HEK293 (cell line): ENCODE measurements at regions of chr12 and their contacts with region 1.

Region 1: DNA sequence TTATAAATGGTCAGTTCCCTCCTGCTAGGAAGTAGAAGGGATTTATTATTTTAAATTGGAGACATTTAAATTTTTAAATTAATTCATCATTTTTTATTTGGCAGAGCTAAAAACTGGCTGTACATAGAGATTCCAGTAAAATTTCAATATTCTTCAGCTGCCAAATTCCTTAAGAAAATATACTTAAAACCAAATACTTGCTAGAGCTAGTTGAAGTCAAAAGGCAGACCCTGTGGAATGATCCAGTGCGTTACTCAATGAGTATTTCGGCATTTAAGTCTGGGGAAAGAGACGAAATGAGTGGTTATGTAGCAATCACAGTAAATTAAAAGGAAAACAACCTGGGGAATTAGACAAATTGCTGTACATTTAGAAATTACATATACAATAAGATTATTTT is 1104.7 kb downstream of the SLC6A15 start:
- H3K4me3 ChIP-seq: no peak overlapping the region
- H3K27ac ChIP-seq: no peak overlapping the region
- H3K4me1 ChIP-seq: no peaks in the 10 kb centered on the region
- CTCF ChIP-seq: no peak

Region 2: DNA sequence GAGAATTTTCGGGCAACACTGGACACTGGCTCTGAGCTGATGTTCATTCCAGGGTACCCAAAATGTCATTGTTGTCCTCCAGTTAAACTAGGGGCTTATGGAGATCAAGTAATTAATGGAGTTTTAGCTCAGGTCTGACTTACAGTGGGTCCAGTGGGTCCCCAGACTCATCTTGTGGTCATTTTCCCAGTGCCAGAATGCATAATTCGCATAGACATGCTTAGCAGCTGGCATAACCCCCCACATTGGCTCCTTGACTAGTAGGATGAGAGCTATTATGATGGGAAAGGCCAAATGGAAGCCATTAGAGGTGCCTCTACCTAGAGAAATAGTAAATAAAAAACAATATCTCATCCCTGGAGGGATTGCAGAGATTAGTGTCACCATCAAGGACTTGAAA is 302.3 kb before region 1 on chr12:
- CTCF ChIA-PET with region 1: no interaction called
- POLR2A ChIA-PET with region 1: no interaction called
- H3K4me3 ChIP-seq: no peak overlapping the region
- H3K27ac ChIP-seq: no peak overlapping the region
- H3K4me1 ChIP-seq: no peaks in the 10 kb centered on the region
- CTCF ChIP-seq: no peak

Region 3: DNA sequence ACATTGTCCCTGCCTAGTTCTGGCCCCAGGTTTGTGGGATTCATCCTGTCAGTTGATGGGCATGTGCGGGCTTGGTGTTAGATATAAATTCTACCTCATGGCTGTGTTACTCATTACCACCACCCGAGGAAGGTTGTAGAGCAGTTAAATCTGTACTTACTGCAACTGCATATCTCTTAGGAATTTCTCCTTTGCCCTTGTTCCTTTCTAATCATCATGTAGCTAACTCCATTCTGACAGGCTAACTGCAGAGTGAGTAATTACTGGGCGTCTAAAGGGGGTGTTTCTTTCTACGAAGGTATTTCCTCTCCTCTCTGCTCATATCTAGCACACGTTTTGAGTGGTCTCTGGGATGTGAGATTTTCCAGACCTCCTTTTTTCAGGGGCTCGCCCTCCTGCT is 44.4 kb before region 1 on chr12:
- CTCF ChIA-PET with region 1: no interaction called
- POLR2A ChIA-PET with region 1: no interaction called
- H3K4me3 ChIP-seq: no peak overlapping the region
- H3K27ac ChIP-seq: no peak overlapping the region
- H3K4me1 ChIP-seq: no peaks in the 10 kb centered on the region
- CTCF ChIP-seq: no peak

Region 4: DNA sequence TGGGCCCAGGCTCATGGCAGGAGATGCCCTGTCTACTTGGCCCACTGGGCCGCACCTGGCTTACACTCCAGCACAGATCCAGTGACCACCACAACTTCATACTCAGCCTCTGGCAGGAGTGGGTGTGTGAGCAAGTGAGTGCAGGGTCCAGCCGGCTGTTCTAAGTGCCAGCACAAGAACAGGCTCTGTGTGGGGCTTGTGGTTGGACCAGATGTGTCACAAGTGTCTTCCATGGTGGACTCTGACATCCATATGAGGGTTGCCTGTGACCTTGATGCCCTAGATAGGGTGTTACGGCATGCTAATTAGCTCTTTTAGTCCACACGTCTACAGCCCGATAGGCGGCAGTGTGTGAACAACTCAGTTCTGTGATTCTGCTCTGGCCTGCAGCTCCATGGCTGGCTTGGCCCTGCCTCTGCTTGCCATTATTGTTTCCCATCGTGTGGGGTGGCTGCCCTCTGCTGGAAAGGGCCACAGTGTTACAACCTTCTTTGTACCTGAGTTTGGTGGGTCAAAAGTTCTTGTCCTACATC is 15.6 kb after region 1 on chr12:
- CTCF ChIA-PET with region 1: interaction called, 12 read pairs
- POLR2A ChIA-PET with region 1: no interaction called
- H3K4me3 ChIP-seq: no peak overlapping the region
- H3K27ac ChIP-seq: no peak overlapping the region
- H3K4me1 ChIP-seq: no peaks in the 10 kb centered on the region
- CTCF ChIP-seq: no peak

Region 5: GRCh38 chr12:83889745-83890144 is 81.9 kb after region 1 on chr12:
- CTCF ChIA-PET with region 1: no interaction called
- POLR2A ChIA-PET with region 1: no interaction called
- H3K4me3 ChIP-seq: no peak overlapping the region
- H3K27ac ChIP-seq: no peak overlapping the region
- H3K4me1 ChIP-seq: no peaks in the 10 kb centered on the region
- CTCF ChIP-seq: no peak